ENCODE measurements at regions of chr12 and their contacts with region 1.

Region 1: DNA sequence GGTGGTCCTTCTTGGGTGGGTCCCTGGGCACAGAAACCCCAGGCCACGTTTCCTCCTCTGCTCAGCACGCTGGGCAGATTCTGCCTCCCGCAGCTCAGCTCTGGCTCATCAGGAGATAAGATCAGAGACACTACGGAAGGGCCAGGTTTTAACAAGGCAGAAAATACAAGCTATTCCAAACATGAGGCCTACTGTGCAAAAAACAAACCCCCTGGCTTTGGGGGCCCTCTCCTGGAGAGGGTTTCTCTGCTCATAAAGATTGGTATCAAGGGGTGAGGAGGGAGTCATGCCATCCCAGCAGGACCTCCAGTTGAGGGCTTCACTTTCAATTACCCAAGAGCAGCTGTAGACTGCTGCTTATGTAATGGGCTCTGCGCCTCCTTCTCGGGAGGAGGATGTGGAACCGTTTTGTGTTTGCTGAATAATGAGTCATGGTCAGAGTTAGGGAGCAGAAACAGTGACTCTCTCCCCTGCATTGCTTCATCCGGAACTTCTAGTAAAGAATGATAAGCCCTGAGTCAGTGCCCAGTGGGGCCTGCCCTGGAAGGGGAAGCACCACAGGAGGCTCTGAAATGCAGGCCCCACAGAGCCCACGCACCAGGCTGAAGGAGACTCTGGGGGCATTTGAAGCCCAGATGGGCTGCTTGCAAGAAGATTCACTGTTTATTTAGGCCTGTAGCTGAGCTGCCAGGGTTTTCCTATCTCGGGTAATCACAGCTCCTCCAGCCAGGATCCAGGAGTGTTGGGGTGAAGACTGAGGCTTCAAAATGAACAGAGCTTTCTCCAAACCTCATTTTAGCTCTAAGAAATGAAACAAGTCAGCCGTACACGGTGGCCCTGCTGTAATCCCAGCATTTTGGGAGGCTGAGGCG is 79.3 kb downstream of the SSPN start:
- DNase-seq: peak; percentile 79 to 95 (median 92)
- H3K4me3 ChIP-seq: no peak overlapping the region
- H3K27ac ChIP-seq: peak overlapping the region; percentile 78 to 93 (median 90)
- H3K4me1 ChIP-seq: peaks cover 6 to 35% of the 10 kb centered on the region in 2 donors
- H3K27me3 ChIP-seq: no peaks in the 10 kb centered on the region
- CTCF ChIP-seq: no peak
- POLR2A ChIP-seq: peak; percentile 39 to 93

Region 2: GRCh38 chr12:25914607-25915006 is 360.1 kb before region 1 on chr12:
- intact Hi-C with region 1: no loop called
- DNase-seq: no peak
- H3K4me3 ChIP-seq: no peak overlapping the region
- H3K27ac ChIP-seq: no peak overlapping the region
- H3K4me1 ChIP-seq: no peaks in the 10 kb centered on the region
- H3K27me3 ChIP-seq: no peaks in the 10 kb centered on the region
- CTCF ChIP-seq: no peak
- POLR2A ChIP-seq: no peak

Region 3: GRCh38 chr12:26126340-26127284 is 148.1 kb before region 1 on chr12:
- intact Hi-C with region 1: loop called in 1 of 2 experiments (anchors 10 kb)
- DNase-seq: peak; percentile 85 to 94 (median 90)
- H3K4me3 ChIP-seq: peak overlapping the region in 3 of 4 donors; percentile 33 to 81 (median 74)
- H3K27ac ChIP-seq: peak overlapping the region; percentile 82 to 99 (median 94)
- H3K4me1 ChIP-seq: peaks cover 8 to 15% of the 10 kb centered on the region in 2 donors
- H3K27me3 ChIP-seq: no peaks in the 10 kb centered on the region
- CTCF ChIP-seq: peak in 1 of 6 experiments; percentile 32
- POLR2A ChIP-seq: peak; percentile 42 to 63

Region 4: GRCh38 chr12:26318661-26319068 is 44.0 kb after region 1 on chr12:
- intact Hi-C with region 1: no loop called
- DNase-seq: peak; percentile 45 to 80 (median 74)
- H3K4me3 ChIP-seq: no peak overlapping the region
- H3K27ac ChIP-seq: peak overlapping the region in 4 of 5 donors; percentile 21 to 84 (median 60)
- H3K4me1 ChIP-seq: peaks cover 11 to 16% of the 10 kb centered on the region in 2 donors
- H3K27me3 ChIP-seq: no peaks in the 10 kb centered on the region
- CTCF ChIP-seq: no peak
- POLR2A ChIP-seq: no peak